IMR-90 (cell line): ENCODE measurements at regions of chr17 and their contacts with region 1.

Region 1: GRCh38 chr17:29124117-29124924 is 55.9 kb downstream of the MYO18A start:
- DNase-seq: peak; percentile 82
- ATAC-seq: peak; percentile 98
- H3K4me3 ChIP-seq: no peak overlapping the region
- H3K27ac ChIP-seq: no peak overlapping the region
- H3K4me1 ChIP-seq: no peaks in the 10 kb centered on the region
- H3K27me3 ChIP-seq: no peaks in the 10 kb centered on the region
- CTCF ChIP-seq: peak; percentile 95
- POLR2A ChIP-seq: no peak
- RAD21 ChIP-seq: peak; percentile 95

Region 2: GRCh38 chr17:29140051-29140621 is 15.8 kb after region 1 on chr17:
- CTCF ChIA-PET with region 1: interaction called, 40 read pairs
- POLR2A ChIA-PET with region 1: no interaction called
- dilution Hi-C with region 1: no loop called
- in situ Hi-C with region 1: no loop called
- intact Hi-C with region 1: loop called (anchors 1 kb)
- DNase-seq: peak; percentile 51
- ATAC-seq: peak; percentile 89
- H3K4me3 ChIP-seq: peak overlapping the region; percentile 38; the same call in 1 of the 2 replicates
- H3K27ac ChIP-seq: peak overlapping the region; percentile 63
- H3K4me1 ChIP-seq: peaks cover 47% of the 10 kb centered on the region
- H3K27me3 ChIP-seq: no peaks in the 10 kb centered on the region
- CTCF ChIP-seq: no peak
- POLR2A ChIP-seq: no peak
- RAD21 ChIP-seq: no peak

Region 3: DNA sequence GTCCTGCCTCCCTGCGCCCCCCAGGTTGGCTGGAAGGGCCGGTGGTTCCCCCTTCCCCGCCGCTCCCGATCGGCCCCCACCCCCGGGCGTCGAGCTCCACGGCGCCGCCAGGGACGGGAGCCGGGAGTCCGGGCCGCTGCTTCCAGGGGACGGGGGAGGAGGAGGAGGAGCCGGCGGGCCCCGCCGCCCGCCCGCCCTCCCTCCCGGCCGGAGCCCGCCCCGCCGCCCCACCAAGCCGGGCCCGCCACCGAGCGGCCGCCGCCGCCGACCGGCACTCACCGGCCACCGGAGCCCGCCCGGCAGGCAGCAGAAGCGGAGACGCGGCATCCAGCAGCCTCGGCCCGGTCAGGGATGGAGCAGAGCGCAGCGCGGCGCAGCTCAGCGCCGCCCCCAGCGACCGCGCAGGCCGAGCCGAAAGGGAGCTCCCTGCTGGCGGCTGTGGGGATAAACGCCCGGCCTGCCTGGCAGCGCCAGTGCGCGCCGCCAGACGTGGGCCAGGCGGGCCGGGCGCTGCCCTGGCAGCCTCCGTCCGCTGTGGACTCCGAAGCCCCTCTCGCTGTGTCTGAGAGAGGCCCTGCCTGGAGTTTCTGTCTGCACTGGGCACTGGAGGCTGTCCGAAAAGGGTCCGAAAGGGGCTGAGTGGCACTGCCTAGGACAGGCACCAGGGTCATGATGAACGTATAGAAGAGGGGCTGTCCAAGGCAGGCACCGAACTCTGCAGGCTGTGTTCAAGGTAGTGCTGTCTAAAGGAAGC is 55.9 kb after region 1 on chr17 and contains the start of gene MYO18A:
- CTCF ChIA-PET with region 1: interaction called, 3 read pairs
- POLR2A ChIA-PET with region 1: no interaction called
- dilution Hi-C with region 1: no loop called
- in situ Hi-C with region 1: no loop called
- intact Hi-C with region 1: loop called (anchors 1 kb)
- DNase-seq: peak; percentile 71
- ATAC-seq: peak; percentile 94
- H3K4me3 ChIP-seq: peak within 1 kb of the TSS; percentile 79
- H3K27ac ChIP-seq: peak within 1 kb of the TSS; percentile 84
- H3K4me1 ChIP-seq: peaks cover 29% of the 10 kb centered on the region
- H3K27me3 ChIP-seq: no peaks in the 10 kb centered on the region
- CTCF ChIP-seq: peak; percentile 98
- POLR2A ChIP-seq: no peak
- RAD21 ChIP-seq: peak; percentile 71
- total RNA-seq, gene MYO18A: 39.1 and 40.0 TPM in 2 replicates